ENCODE measurements at regions of chr5 and their contacts with region 1.

Region 1: DNA sequence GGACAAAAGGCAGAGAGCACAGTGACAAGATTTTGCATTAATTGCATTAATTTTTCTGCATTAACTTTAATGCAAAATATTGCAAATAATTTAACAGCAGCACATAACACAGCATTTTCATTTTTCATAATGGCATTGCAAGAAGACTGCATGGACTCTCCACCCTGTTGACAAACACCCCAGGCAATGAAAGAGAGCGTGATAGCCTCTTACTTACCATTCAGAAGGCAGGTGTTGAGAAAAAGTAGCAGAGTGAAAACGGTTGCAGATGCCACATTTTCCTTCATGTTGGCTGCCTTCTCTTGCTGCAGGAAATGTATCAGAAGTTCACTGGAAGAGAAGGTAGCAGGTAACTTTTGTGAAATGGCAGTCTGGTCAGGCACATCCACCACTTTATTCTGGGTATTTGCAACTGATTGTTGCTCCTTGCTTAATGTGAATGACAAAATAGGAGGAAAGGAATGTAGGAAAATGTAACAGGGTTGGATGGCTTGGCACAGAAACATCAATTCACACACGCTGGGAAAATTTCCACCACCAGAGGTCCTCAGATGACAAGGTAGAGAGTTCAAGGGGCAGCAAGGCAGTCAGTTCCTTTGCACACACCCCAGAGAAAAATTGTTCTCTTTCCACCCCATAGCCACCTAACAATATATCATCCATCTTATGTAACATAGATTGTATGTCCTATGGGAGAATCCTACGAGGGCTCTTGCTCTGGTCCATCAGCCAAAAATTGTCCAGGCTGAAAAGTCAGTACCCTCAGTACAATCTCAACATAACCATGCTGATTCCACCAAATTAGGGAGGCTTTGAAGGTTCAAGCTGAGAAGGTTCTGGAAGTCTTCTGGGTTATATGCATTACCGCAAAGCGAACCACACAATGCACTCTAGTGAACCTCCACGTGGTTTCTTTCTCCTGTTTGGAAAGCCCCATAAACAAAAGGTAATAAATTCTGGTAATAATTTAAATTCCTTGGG is 41.9 kb upstream of the AGXT2 start:
- DNase-seq: peak; percentile 32
- H3K4me3 ChIP-seq: no peak overlapping the region
- H3K27ac ChIP-seq: no peak overlapping the region
- H3K4me1 ChIP-seq: no peaks in the 10 kb centered on the region
- H3K27me3 ChIP-seq: no peaks in the 10 kb centered on the region
- CTCF ChIP-seq: peak; percentile 56 to 74

Region 2: GRCh38 chr5:34838785-34839714 is 250.6 kb before region 1 on chr5 and contains the start of gene TTC23L:
- CTCF ChIA-PET with region 1: no interaction called
- dilution Hi-C with region 1: no loop called
- in situ Hi-C with region 1: no loop called
- intact Hi-C with region 1: no loop called
- DNase-seq: peak; percentile 91
- H3K4me3 ChIP-seq: peak within 1 kb of the TSS; percentile 42 to 62 (median 57)
- H3K27ac ChIP-seq: peak within 1 kb of the TSS; percentile 46
- H3K4me1 ChIP-seq: no peaks in the 10 kb centered on the region
- H3K27me3 ChIP-seq: no peaks in the 10 kb centered on the region
- CTCF ChIP-seq: no peak
- total RNA-seq, gene TTC23L: 0.17 TPM in 1 of 2 donors, not detected in the other

Region 3: DNA sequence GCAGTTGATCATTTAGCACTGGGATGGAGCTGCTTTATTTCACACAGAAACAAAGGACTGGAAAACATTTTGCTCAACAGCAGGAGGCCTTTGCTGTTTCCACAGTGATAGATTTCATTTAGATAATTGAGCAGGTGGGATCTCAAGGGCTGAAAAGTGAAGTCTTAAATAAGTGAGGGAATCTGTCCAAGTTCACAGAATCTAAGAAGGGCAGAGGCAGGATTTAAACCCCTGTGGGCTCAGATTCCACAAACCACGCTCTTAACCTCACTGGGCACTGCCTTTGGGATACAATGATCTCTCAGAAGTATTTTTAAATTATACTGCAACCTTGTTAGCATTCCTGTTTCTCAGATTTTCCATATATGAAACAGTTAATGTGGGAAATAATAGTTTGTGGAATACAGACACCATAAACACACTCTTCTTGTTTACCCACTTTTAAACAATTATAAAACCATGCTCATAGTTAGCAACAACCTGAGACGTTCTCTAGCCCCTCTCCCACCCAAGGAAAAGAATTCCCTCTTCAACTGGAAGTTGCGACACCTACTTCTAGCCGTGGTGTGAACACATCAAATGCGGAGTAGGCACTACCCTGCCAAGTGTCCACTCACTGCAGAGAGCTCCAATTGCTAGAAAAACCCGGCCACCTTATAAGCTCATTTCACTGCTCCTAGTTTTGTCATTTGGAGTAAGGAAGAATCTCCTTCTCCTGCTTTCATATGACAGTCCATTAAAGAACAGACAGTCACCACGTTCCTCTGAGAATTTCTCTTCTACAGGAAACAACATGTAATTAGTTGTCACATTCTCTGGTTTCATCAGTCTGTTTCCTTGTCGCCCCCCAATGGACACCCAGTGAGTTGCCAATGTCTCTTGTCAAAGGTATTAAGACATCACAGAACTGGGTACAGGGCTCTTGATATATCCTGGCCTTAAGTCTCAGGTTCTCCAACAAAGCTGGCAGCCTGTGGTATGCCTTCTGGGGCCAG is 93.2 kb after region 1 on chr5:
- CTCF ChIA-PET with region 1: no interaction called
- dilution Hi-C with region 1: no loop called
- in situ Hi-C with region 1: no loop called
- intact Hi-C with region 1: loop called (anchors 1 kb)
- DNase-seq: peak; percentile 11
- H3K4me3 ChIP-seq: no peak overlapping the region
- H3K27ac ChIP-seq: no peak overlapping the region
- H3K4me1 ChIP-seq: no peaks in the 10 kb centered on the region
- H3K27me3 ChIP-seq: no peaks in the 10 kb centered on the region
- CTCF ChIP-seq: peak; percentile 23 to 24

Region 4: GRCh38 chr5:35598707-35599370 is 509.2 kb after region 1 on chr5:
- CTCF ChIA-PET with region 1: no interaction called
- dilution Hi-C with region 1: no loop called
- in situ Hi-C with region 1: no loop called
- intact Hi-C with region 1: loop called (anchors 2 kb)
- DNase-seq: no peak
- H3K4me3 ChIP-seq: no peak overlapping the region
- H3K27ac ChIP-seq: no peak overlapping the region
- H3K4me1 ChIP-seq: no peaks in the 10 kb centered on the region
- H3K27me3 ChIP-seq: no peaks in the 10 kb centered on the region
- CTCF ChIP-seq: no peak

Region 5: DNA sequence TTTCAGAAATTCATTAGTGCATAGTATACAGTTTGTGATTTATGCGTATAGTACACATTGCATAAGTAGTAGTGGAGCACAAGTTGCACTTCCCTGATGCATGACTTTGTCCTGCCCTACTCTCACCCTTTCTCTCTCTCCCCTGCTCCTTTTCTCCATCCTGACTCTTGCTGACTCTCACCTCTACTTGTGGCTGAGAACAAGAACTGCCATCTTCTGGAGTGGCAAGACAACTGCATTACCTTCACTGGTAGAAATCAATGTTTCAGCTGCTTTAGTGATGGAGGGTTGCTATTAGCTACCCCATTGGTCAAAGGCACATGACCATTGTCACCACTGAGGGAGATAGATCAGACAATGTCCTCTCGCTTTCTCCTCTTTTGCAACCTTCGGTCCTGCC is 554.9 kb after region 1 on chr5:
- CTCF ChIA-PET with region 1: no interaction called
- dilution Hi-C with region 1: no loop called
- in situ Hi-C with region 1: no loop called
- intact Hi-C with region 1: loop called (anchors 5 kb)
- DNase-seq: peak; percentile 33
- H3K4me3 ChIP-seq: no peak overlapping the region
- H3K27ac ChIP-seq: no peak overlapping the region
- H3K4me1 ChIP-seq: no peaks in the 10 kb centered on the region
- H3K27me3 ChIP-seq: no peaks in the 10 kb centered on the region
- CTCF ChIP-seq: peak in 1 of 2 donors; percentile 7

Region 6: GRCh38 chr5:35777358-35778087 is 687.9 kb after region 1 on chr5:
- CTCF ChIA-PET with region 1: no interaction called
- dilution Hi-C with region 1: no loop called
- in situ Hi-C with region 1: no loop called
- intact Hi-C with region 1: loop called (anchors 2 kb)
- DNase-seq: peak; percentile 54
- H3K4me3 ChIP-seq: no peak overlapping the region
- H3K27ac ChIP-seq: no peak overlapping the region
- H3K4me1 ChIP-seq: no peaks in the 10 kb centered on the region
- H3K27me3 ChIP-seq: no peaks in the 10 kb centered on the region
- CTCF ChIP-seq: peak; percentile 44 to 68

Measured in mammary epithelial cell (primary cell).